OCI-LY7 (cell line): ENCODE measurements at regions of chr18 and their contacts with region 1.

Region 1: GRCh38 chr18:23356915-23357601 is 96.0 kb upstream of the RIOK3 start:
- DNase-seq: no peak
- H3K4me3 ChIP-seq: no peak overlapping the region
- H3K27ac ChIP-seq: no peak overlapping the region
- H3K4me1 ChIP-seq: peaks cover 24% of the 10 kb centered on the region
- CTCF ChIP-seq: no peak

Region 2: DNA sequence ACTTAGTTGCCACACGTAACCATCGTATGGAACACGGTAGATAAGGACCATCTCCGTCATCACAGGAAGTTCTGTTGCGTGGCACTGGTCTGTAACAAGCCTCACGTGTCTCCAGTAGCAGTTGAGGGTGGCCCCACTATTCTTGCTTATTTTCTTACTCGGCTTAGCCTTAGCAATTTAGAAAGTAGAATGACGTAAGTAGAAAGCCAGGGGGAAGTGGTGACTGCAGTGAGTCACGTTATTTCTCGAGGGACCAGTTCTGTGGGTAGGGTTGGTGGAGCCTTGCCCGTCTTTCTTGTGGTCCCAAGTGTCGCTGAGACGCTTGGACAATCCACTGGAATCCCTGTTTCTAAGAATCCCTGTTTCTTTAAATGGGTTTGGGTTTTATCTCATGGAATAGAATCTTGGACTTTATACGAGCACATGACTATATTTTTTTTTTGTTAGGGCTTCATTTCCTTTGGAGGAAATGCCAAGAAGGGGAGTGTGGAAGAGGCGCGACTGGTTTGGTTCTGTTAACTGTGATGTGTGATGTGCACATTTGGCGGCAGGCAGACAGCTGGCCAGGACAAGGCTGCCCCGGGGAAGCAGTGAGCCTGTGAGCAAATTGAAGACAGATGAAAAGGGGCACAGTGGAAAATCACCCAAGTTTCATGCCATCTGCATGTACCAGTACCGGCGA is 125.6 kb before region 1 on chr18:
- CTCF ChIA-PET with region 1: no interaction called
- POLR2A ChIA-PET with region 1: no interaction called
- intact Hi-C with region 1: loop called (anchors 2 kb)
- DNase-seq: peak; percentile 92
- H3K4me3 ChIP-seq: peak overlapping the region; percentile 5
- H3K27ac ChIP-seq: peak overlapping the region; percentile 100
- H3K4me1 ChIP-seq: peaks cover 80% of the 10 kb centered on the region
- CTCF ChIP-seq: no peak

Region 3: DNA sequence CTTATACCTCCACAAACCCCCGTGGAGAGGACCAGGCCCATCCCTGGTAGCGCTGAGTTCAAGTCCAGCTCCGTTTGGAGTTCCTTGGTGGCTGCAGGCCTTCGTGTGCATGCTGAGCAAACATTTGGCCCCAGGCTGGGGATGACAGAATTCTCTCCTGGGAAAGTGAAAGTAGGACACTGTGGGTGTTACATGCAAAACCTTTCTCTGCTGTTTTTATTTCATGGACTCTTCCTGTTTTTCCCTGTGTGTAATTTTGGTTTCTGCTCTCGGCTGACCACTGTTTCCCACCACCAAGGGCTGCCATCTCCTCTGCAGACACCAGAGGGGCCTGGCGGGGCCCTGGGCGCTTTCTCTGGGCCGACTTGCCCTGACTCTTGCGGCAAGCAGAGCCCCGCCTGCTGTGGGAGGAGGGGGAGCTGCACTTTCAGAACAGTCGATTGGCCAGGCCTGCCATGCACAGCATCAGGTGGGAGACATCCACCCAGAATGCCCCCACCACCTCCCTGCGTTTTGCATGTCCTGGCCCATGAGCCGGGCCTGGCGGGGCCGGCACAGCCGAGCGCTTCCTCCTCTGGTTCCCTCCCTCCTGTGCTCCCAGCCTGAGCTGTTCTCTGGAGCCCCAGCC is 119.4 kb before region 1 on chr18:
- CTCF ChIA-PET with region 1: interaction called, 5 read pairs
- POLR2A ChIA-PET with region 1: interaction called, 6 read pairs
- intact Hi-C with region 1: loop called (anchors 1 kb)
- DNase-seq: peak; percentile 93
- H3K4me3 ChIP-seq: peak overlapping the region; percentile 43
- H3K27ac ChIP-seq: peak overlapping the region; percentile 95
- H3K4me1 ChIP-seq: peaks cover 80% of the 10 kb centered on the region
- CTCF ChIP-seq: peak; percentile 65

Region 4: GRCh38 chr18:23259701-23260582 is 97.1 kb before region 1 on chr18:
- CTCF ChIA-PET with region 1: no interaction called
- POLR2A ChIA-PET with region 1: no interaction called
- intact Hi-C with region 1: no loop called
- DNase-seq: peak; percentile 74
- H3K4me3 ChIP-seq: peak overlapping the region; percentile 4
- H3K27ac ChIP-seq: peak overlapping the region; percentile 60
- H3K4me1 ChIP-seq: peaks cover 29% of the 10 kb centered on the region
- CTCF ChIP-seq: no peak

Region 5: DNA sequence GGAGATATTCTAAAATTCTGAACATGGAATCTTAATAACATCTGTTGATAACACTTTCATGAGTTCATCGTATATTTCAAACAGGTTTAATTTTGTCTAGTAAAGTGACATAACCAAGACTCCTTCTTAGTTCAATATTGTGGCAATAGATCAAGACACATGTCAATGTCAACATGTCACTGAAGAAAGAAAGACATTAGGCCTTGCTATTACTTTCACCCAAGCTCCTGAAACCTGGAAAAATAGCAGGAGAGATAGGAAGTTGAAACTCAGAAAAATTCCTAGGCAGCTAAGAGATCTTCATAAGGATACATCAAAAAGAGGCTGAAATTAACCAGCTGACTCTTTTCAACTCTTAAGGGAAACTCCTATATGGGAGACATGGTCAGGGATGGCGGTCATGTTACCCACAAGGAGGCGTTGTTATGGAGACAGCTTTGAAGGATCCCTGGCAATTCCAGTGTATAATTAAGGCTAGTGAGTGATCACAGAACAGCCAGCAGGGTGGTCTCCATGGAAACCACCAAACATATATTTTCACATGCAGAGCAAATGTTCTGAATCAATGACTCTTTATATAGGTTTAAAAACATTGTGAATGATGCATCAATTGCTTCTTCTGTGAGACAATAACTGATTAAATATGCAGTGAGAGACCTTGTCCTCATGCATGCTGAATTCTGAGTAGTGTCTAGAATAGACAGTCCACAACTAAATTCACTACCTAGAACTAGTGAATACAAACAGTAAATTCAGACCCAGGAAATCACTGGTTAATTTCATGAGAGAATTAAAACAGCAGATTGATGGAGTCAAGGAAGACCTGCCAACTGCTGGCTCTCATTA is 19.2 kb before region 1 on chr18:
- CTCF ChIA-PET with region 1: no interaction called
- POLR2A ChIA-PET with region 1: interaction called, 10 read pairs
- intact Hi-C with region 1: no loop called
- DNase-seq: no peak
- H3K4me3 ChIP-seq: no peak overlapping the region
- H3K27ac ChIP-seq: no peak overlapping the region
- H3K4me1 ChIP-seq: no peaks in the 10 kb centered on the region
- CTCF ChIP-seq: no peak

Region 6: DNA sequence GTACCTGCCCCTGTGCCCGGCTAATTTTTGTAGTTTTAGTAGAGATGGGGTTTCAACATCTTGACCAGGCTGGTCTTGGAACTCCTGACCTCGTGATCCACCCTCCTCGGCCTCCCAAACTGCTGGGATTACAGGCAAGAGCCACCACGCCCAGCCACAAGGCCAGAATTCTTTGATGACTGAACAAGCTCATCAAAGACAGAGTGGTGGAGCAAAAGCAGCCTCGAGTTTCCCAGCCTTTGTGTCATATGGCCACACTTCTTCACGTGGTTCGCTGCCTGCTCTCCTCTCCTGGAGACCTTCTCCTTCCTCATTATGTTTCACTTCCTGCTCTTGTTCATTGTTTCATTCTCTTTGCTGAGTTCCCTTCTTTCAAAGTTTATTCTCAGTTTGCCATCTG is 239.1 kb after region 1 on chr18:
- CTCF ChIA-PET with region 1: no interaction called
- POLR2A ChIA-PET with region 1: no interaction called
- intact Hi-C with region 1: no loop called
- DNase-seq: peak; percentile 38
- H3K4me3 ChIP-seq: no peak overlapping the region
- H3K27ac ChIP-seq: no peak overlapping the region
- H3K4me1 ChIP-seq: peaks cover 6% of the 10 kb centered on the region
- CTCF ChIP-seq: no peak